SK-N-SH (cell line): ENCODE measurements at regions of chr3 and their contacts with region 1.

Region 1: GRCh38 chr3:13495921-13496723 is 16.0 kb downstream of the HDAC11 start:
- DNase-seq: peak; percentile 84
- H3K4me3 ChIP-seq: no peak overlapping the region
- H3K27ac ChIP-seq: no peak overlapping the region
- H3K4me1 ChIP-seq: peaks cover 0 to 11% of the 10 kb centered on the region in 2 experiments; a peak in 1 of 4 replicates
- H3K27me3 ChIP-seq: no peaks in the 10 kb centered on the region
- CTCF ChIP-seq: peak; percentile 91
- EP300 ChIP-seq: no peak
- RAD21 ChIP-seq: peak; percentile 99

Region 2: GRCh38 chr3:12891985-12892839 is 603.9 kb before region 1 on chr3:
- CTCF ChIA-PET with region 1: no interaction called
- POLR2A ChIA-PET with region 1: no interaction called
- DNase-seq: peak; percentile 80
- H3K4me3 ChIP-seq: peak overlapping the region; percentile 21 to 31; a peak in 2 of 4 replicates
- H3K27ac ChIP-seq: no peak overlapping the region
- H3K4me1 ChIP-seq: peaks cover 0 to 7% of the 10 kb centered on the region in 2 experiments; a peak in 1 of 4 replicates
- H3K27me3 ChIP-seq: peaks cover 5% of the 10 kb centered on the region; the same call in 1 of the 2 replicates
- CTCF ChIP-seq: peak; percentile 91
- EP300 ChIP-seq: no peak
- RAD21 ChIP-seq: peak; percentile 97

Region 3: GRCh38 chr3:13479581-13480339 is 16.4 kb before region 1 on chr3 and contains the start of gene HDAC11:
- CTCF ChIA-PET with region 1: interaction called, 42 read pairs
- POLR2A ChIA-PET with region 1: no interaction called
- DNase-seq: peak; percentile 100
- H3K4me3 ChIP-seq: peak within 1 kb of the TSS; percentile 68 to 87
- H3K27ac ChIP-seq: peak within 1 kb of the TSS; percentile 58 to 66; a peak in 2 of 4 replicates
- H3K4me1 ChIP-seq: peaks cover 9 to 28% of the 10 kb centered on the region in 2 experiments; a peak in 1 of 4 replicates
- H3K27me3 ChIP-seq: no peaks in the 10 kb centered on the region
- CTCF ChIP-seq: no peak
- EP300 ChIP-seq: no peak
- RAD21 ChIP-seq: no peak
- polyA plus RNA-seq, gene HDAC11: 13.9 and 17.5 TPM in 2 replicates

Region 4: GRCh38 chr3:13528217-13528867 is 32.2 kb after region 1 on chr3:
- CTCF ChIA-PET with region 1: interaction called, 12 read pairs
- POLR2A ChIA-PET with region 1: no interaction called
- DNase-seq: peak; percentile 72
- H3K4me3 ChIP-seq: no peak overlapping the region
- H3K27ac ChIP-seq: no peak overlapping the region
- H3K4me1 ChIP-seq: peaks cover 0 to 21% of the 10 kb centered on the region in 2 experiments; a peak in 3 of 4 replicates
- H3K27me3 ChIP-seq: no peaks in the 10 kb centered on the region
- CTCF ChIP-seq: peak; percentile 28
- EP300 ChIP-seq: no peak
- RAD21 ChIP-seq: no peak

Region 5: DNA sequence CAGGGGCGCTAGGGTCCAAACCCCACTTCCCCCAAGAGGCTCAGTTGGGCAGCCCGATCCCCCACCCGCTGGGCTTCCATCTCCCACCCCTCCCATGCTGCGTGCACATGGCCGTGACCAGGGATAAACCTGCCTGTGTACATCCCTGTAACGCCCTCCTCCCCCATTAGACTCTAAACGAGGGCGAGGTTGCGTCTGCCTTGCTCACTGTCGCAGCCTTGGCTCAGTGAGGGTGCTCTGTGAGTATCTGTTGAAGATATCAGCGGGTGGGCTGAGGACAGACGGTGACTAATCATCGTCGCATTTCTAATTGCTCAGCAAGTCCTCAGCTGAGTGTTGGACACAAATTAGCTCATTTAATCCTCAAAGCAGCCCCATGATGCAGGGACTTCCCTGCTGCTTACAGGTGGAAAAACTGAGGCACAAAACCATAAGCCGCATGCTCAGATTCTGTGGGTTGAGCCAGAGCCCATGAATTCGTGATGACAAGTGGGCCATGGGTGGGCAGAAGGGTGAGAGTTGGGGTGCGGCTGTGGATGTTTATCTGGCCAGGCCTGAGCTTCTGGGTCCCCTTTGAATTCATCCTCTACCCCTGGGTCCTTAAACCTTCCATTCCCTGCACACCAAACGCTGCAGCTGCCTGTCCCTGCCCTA is 78.8 kb after region 1 on chr3:
- CTCF ChIA-PET with region 1: interaction called, 23 read pairs
- POLR2A ChIA-PET with region 1: interaction called, 8 read pairs
- DNase-seq: no peak
- H3K4me3 ChIP-seq: no peak overlapping the region
- H3K27ac ChIP-seq: peak overlapping the region in 1 of 2 experiments; percentile 99; a peak in 3 of 4 replicates
- H3K4me1 ChIP-seq: peaks cover 3 to 76% of the 10 kb centered on the region in 2 experiments; a peak in 2 of 4 replicates
- H3K27me3 ChIP-seq: no peaks in the 10 kb centered on the region
- CTCF ChIP-seq: no peak
- EP300 ChIP-seq: no peak
- RAD21 ChIP-seq: no peak

Region 6: GRCh38 chr3:13638927-13639326 is 142.8 kb after region 1 on chr3:
- CTCF ChIA-PET with region 1: interaction called, 872 read pairs
- POLR2A ChIA-PET with region 1: no interaction called
- DNase-seq: no peak
- H3K4me3 ChIP-seq: no peak overlapping the region
- H3K27ac ChIP-seq: no peak overlapping the region
- H3K4me1 ChIP-seq: peaks cover 0 to 6% of the 10 kb centered on the region in 2 experiments; a peak in 1 of 4 replicates
- H3K27me3 ChIP-seq: no peaks in the 10 kb centered on the region
- CTCF ChIP-seq: no peak
- EP300 ChIP-seq: no peak
- RAD21 ChIP-seq: no peak

Region 7: DNA sequence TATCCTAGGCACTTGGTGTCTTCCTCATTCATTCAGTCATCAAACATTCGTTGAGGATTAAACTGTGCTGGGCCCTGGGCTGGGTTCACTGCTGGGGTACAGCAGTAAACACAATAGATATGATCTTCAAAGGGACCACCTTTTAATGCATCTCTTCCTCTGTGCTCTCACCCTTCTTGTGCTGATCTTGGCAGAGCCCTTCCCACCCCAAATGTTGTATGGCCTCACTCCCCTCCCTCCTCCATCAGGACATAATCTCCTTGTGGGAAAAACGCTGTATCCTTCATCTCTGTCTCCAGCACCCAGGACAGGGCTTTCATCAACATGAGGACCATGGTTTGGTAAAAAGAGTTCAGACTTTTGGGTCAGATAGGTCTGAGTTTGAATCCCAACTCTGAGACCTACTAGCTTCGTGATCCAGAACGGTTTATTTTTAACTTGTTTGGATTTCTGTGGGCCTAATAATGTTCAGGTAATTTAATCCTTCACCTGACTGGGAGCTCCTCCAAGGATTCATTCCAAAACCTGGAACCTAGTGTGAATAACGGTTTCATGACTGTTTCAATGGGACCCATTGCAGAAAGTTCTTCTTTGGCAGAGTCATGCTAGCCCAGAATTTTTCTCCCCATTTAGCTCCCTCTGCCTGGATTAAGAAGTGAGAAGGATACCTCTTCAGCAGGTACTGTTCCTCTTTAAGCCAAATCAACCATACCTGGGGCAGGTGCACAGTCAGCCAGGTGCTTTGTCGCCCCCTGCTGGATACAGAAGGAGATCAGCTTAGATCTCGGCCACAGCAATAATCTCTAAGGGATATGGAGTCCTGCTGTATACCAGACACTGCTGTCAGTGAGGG is 389.0 kb after region 1 on chr3:
- CTCF ChIA-PET with region 1: interaction called, 22 read pairs
- POLR2A ChIA-PET with region 1: no interaction called
- DNase-seq: peak; percentile 72
- H3K4me3 ChIP-seq: peak overlapping the region in 1 of 2 experiments; percentile 28; a peak in 1 of 4 replicates
- H3K27ac ChIP-seq: no peak overlapping the region
- H3K4me1 ChIP-seq: peaks cover 0 to 4% of the 10 kb centered on the region in 2 experiments; a peak in 1 of 4 replicates
- H3K27me3 ChIP-seq: peaks cover 11% of the 10 kb centered on the region; the same call in 1 of the 2 replicates
- CTCF ChIP-seq: peak; percentile 66
- EP300 ChIP-seq: no peak
- RAD21 ChIP-seq: peak; percentile 72